ENCODE measurements at regions of chr10 and their contacts with region 1.

Region 1: DNA sequence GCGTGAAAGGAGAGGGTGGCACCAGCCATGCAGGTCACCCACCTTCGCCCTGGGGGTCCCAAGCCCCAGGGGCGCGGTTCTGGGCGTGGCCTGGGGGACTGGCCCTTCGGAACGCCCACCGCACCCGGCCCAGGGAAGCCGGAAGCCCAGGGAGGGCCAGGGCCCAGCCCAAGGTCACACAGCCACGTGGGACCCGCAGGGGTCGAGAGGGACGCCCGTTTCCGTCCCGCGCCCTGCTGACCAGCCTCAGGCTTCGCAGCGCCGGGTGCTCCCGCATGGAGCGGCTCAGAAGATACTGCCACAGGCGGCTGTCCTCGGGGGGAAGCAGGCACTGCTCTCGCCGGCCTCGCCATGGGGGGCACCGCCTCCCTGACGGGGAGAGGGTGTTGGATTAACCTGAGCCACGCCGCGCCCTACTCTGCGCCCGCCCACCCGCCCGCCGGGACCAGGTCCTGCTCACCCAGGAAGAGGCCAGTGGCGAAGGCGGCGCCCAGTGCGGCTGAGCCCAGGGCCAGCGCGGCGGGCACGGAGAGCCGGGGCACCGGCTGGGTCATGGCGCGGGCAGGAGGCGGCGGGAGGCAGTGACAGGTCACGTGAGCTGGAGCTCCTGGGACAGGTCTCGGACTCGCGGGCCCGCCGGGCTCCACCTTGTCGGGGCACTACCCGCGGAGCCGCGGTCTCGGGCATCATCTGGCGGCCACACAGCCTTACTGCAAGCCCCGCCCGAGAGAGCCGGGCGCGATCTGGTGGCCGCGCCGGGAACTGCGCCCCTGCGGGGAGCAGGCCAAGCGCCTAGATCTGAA is at the start of gene COMTD1:
- DNase-seq: peak; percentile 95 to 98 (median 97)
- ATAC-seq: peak; percentile 80
- H3K4me3 ChIP-seq: peak within 1 kb of the TSS; percentile 42
- H3K4me1 ChIP-seq: peaks cover 2% of the 10 kb centered on the region
- CTCF ChIP-seq: peak; percentile 100
- total RNA-seq, gene COMTD1: 42.9 to 76.3 (median 72.3) TPM

Region 2: DNA sequence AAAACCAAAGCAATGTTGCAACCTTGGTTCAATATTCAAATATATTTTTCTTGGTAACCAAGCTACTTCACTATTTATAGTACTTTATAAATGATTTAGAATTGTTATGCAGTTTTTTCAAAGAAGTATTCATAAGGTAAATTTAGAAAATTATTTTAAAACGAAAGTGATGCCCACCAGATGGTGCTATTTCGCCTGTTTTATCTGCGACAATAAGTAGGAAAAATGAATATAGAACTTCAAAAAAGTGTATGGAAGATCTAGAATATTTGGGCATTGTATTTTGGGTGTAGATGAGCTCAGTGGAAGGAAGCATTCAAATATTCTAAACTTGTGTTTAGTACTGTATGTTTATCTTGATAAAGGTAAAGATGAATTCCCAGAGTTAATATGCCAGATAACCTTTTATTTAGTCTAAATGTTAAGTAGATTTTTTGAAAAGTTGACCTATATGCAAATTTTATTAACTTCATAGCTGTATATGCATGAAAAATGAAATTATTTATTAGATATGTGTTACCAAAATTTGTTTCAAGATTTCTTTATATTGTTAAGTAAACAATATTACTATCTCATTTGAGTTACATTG is 991.4 kb before region 1 on chr10:
- intact Hi-C with region 1: loop called in 1 of 2 experiments (anchors 10 kb)
- DNase-seq: peak in 1 of 3 donors; percentile 63
- ATAC-seq: no peak
- H3K4me3 ChIP-seq: no peak overlapping the region
- H3K4me1 ChIP-seq: no peaks in the 10 kb centered on the region
- CTCF ChIP-seq: peak; percentile 31

Region 3: GRCh38 chr10:75772153-75772887 is 536.7 kb after region 1 on chr10:
- intact Hi-C with region 1: no loop called
- DNase-seq: peak in 1 of 3 donors; percentile 17
- ATAC-seq: no peak
- H3K4me3 ChIP-seq: no peak overlapping the region
- H3K4me1 ChIP-seq: no peaks in the 10 kb centered on the region
- CTCF ChIP-seq: no peak